ENCODE measurements at regions of chr12 and their contacts with region 1.

Region 1: DNA sequence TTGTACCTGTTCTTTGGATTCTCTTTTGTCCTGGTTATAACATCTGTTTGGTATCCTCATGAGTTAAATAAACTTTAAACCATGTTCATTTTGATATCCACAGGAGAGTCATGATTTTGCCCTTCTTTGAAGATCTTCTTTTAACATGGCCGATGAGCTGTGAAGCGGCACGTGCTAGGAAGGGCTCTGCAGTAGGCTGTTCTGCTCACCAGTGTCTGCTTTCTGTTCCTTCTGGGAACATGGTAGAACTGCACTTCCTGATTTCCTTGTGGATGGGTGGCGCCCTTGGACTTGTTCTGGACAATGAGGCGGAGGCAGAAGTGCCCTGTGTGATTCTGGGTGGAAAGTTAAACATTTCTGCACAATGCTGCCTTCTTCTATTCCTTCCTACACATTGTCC is 138.1 kb downstream of the TMEM132D start:
- DNase-seq: no peak
- ATAC-seq: no peak
- H3K4me3 ChIP-seq: no peak overlapping the region
- H3K4me3 Mint-ChIP-seq: no peak overlapping the region
- H3K27ac ChIP-seq: no peak overlapping the region
- H3K27ac Mint-ChIP-seq: no peak overlapping the region
- H3K4me1 ChIP-seq: no peaks in the 10 kb centered on the region
- H3K4me1 Mint-ChIP-seq: peaks cover 0 to under 1% (median 0%) of the 10 kb centered on the region in 7 donors
- H3K27me3 ChIP-seq: no peaks in the 10 kb centered on the region
- H3K27me3 Mint-ChIP-seq: peaks cover 0 to 5% (median 0%) of the 10 kb centered on the region in 5 donors

Region 2: GRCh38 chr12:129193263-129193871 is 572.4 kb before region 1 on chr12:
- CTCF ChIA-PET with region 1: no interaction called
- POLR2A ChIA-PET with region 1: no interaction called
- intact Hi-C with region 1: no loop called
- DNase-seq: no peak
- ATAC-seq: no peak
- H3K4me3 ChIP-seq: no peak overlapping the region
- H3K4me3 Mint-ChIP-seq: no peak overlapping the region
- H3K27ac ChIP-seq: no peak overlapping the region
- H3K27ac Mint-ChIP-seq: no peak overlapping the region
- H3K4me1 ChIP-seq: no peaks in the 10 kb centered on the region
- H3K4me1 Mint-ChIP-seq: no peaks in the 10 kb centered on the region
- H3K27me3 ChIP-seq: no peaks in the 10 kb centered on the region
- H3K27me3 Mint-ChIP-seq: peaks cover 0 to 12% (median 0%) of the 10 kb centered on the region in 5 donors

Region 3: DNA sequence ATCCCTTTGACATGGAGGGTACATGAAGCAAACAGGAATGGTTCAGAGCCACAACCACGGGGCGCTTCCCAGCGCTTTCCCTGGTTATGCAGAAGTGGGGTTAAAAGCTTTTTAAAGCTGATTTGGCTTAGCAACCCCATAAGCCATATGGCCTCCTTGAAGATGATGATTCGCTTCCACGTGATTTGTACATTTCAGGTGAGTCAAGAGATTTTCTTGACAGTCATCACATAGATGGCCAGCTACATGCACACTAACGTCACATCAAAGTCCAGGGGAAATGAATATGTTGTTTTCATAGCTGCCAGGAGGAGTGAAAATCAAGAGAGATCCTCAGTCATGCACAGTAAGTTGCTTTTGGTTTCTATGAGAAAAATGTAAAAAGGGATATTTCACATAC is 171.6 kb before region 1 on chr12:
- CTCF ChIA-PET with region 1: no interaction called
- POLR2A ChIA-PET with region 1: no interaction called
- intact Hi-C with region 1: loop called in 1 of 2 experiments (anchors 5 kb)
- DNase-seq: no peak
- ATAC-seq: no peak
- H3K4me3 ChIP-seq: no peak overlapping the region
- H3K4me3 Mint-ChIP-seq: no peak overlapping the region
- H3K27ac ChIP-seq: no peak overlapping the region
- H3K27ac Mint-ChIP-seq: no peak overlapping the region
- H3K4me1 ChIP-seq: no peaks in the 10 kb centered on the region
- H3K4me1 Mint-ChIP-seq: no peaks in the 10 kb centered on the region
- H3K27me3 ChIP-seq: no peaks in the 10 kb centered on the region
- H3K27me3 Mint-ChIP-seq: no peaks in the 10 kb centered on the region

Measured in naive thymus-derived CD4-positive, alpha-beta T cell (primary cell).